ENCODE measurements at regions of chr9 and their contacts with region 1.

Region 1: DNA sequence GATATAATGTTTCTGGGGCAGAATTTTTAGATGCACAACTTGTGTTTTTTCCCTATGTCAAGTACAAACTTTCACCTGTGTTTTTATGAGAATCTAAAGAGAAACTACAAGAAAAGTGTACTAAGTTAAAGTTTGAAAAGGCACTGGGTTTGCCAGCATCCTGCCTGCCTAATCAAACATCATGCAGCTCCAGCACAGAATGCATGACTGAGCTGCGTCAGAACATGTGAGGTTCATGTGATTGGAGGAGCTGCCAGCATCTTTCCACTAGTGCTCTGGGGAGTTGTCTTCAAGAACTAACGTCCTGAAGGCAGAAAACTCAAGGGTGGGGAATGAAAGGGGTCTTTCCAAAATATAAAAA is 46.1 kb upstream of the RIC1 start:
- DNase-seq: peak; percentile 89
- ATAC-seq: peak; percentile 59
- H3K4me3 ChIP-seq: no peak overlapping the region
- H3K27ac ChIP-seq: peak overlapping the region; percentile 46
- H3K4me1 ChIP-seq: peaks cover 14% of the 10 kb centered on the region
- H3K27me3 ChIP-seq: no peaks in the 10 kb centered on the region
- CTCF ChIP-seq: no peak
- POLR2A ChIP-seq: no peak
- RAD21 ChIP-seq: no peak

Region 2: GRCh38 chr9:4382722-4383317 is 1200.0 kb before region 1 on chr9:
- CTCF ChIA-PET with region 1: no interaction called
- POLR2A ChIA-PET with region 1: no interaction called
- dilution Hi-C with region 1: no loop called
- in situ Hi-C with region 1: loop called (anchors 25 kb)
- intact Hi-C with region 1: no loop called
- DNase-seq: peak; percentile 23
- ATAC-seq: peak; percentile 64; the same call in 1 of the 2 replicates
- H3K4me3 ChIP-seq: no peak overlapping the region
- H3K27ac ChIP-seq: no peak overlapping the region
- H3K4me1 ChIP-seq: no peaks in the 10 kb centered on the region
- H3K27me3 ChIP-seq: peaks cover 19% of the 10 kb centered on the region
- CTCF ChIP-seq: peak; percentile 67
- POLR2A ChIP-seq: no peak
- RAD21 ChIP-seq: peak; percentile 70

Region 3: GRCh38 chr9:5437254-5438216 is 145.3 kb before region 1 on chr9 and contains the start of gene PLGRKT:
- CTCF ChIA-PET with region 1: interaction called, 10 read pairs
- POLR2A ChIA-PET with region 1: no interaction called
- dilution Hi-C with region 1: no loop called
- in situ Hi-C with region 1: no loop called
- intact Hi-C with region 1: no loop called
- DNase-seq: peak; percentile 87
- ATAC-seq: peak; percentile 98
- H3K4me3 ChIP-seq: peak within 1 kb of the TSS; percentile 75
- H3K27ac ChIP-seq: peak within 1 kb of the TSS; percentile 70
- H3K4me1 ChIP-seq: peaks cover 5% of the 10 kb centered on the region
- H3K27me3 ChIP-seq: no peaks in the 10 kb centered on the region
- CTCF ChIP-seq: peak; percentile 29; the same call in 1 of the 2 replicates
- POLR2A ChIP-seq: peak; percentile 81
- RAD21 ChIP-seq: peak; percentile 27
- total RNA-seq, gene PLGRKT: 12.7 and 13.6 TPM in 2 replicates

Region 4: DNA sequence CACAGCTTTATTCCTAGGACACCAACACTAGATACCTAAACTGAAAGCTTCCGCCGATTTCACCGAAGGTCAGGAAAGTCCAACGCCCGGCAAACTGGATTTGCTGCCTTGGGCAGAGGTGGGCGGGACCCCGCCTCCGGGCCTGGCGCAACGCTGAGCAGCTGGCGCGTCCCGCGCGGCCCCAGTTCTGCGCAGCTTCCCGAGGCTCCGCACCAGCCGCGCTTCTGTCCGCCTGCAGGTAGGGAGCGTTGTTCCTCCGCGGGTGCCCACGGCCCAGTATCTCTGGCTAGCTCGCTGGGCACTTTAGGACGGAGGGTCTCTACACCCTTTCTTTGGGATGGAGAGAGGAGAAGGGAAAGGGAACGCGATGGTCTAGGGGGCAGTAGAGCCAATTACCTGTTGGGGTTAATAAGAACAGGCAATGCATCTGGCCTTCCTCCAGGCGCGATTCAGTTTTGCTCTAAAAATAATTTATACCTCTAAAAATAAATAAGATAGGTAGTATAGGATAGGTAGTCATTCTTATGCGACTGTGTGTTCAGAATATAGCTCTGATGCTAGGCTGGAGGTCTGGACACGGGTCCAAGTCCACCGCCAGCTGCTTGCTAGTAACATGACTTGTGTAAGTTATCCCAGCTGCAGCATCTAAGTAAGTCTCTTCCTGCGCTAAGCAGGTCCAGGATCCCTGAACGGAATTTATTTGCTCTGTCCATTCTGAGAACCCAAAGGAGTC is 132.3 kb before region 1 on chr9 and contains the start of gene CD274:
- CTCF ChIA-PET with region 1: interaction called, 10 read pairs
- POLR2A ChIA-PET with region 1: no interaction called
- dilution Hi-C with region 1: no loop called
- in situ Hi-C with region 1: loop called (anchors 5 kb)
- intact Hi-C with region 1: no loop called
- DNase-seq: peak; percentile 93
- ATAC-seq: peak; percentile 96
- H3K4me3 ChIP-seq: peak within 1 kb of the TSS; percentile 62
- H3K27ac ChIP-seq: peak within 1 kb of the TSS; percentile 89
- H3K4me1 ChIP-seq: peaks cover 6% of the 10 kb centered on the region
- H3K27me3 ChIP-seq: no peaks in the 10 kb centered on the region
- CTCF ChIP-seq: peak; percentile 70
- POLR2A ChIP-seq: peak; percentile 83
- RAD21 ChIP-seq: peak; percentile 67
- total RNA-seq, gene CD274: 19.4 and 29.4 TPM in 2 replicates

Region 5: GRCh38 chr9:5459289-5459829 is 123.5 kb before region 1 on chr9:
- CTCF ChIA-PET with region 1: no interaction called
- POLR2A ChIA-PET with region 1: no interaction called
- dilution Hi-C with region 1: no loop called
- in situ Hi-C with region 1: loop called (anchors 5 kb)
- intact Hi-C with region 1: no loop called
- DNase-seq: no peak
- ATAC-seq: no peak
- H3K4me3 ChIP-seq: no peak overlapping the region
- H3K27ac ChIP-seq: no peak overlapping the region
- H3K4me1 ChIP-seq: peaks cover 2% of the 10 kb centered on the region; the same call in 1 of the 2 replicates
- H3K27me3 ChIP-seq: no peaks in the 10 kb centered on the region
- CTCF ChIP-seq: no peak
- POLR2A ChIP-seq: no peak
- RAD21 ChIP-seq: no peak

Region 6: GRCh38 chr9:5510360-5510931 is 72.4 kb before region 1 on chr9 and contains the start of gene PDCD1LG2:
- CTCF ChIA-PET with region 1: no interaction called
- POLR2A ChIA-PET with region 1: interaction called, 11 read pairs
- dilution Hi-C with region 1: no loop called
- in situ Hi-C with region 1: loop called (anchors 5 kb)
- intact Hi-C with region 1: loop called (anchors 1 kb)
- DNase-seq: peak; percentile 84
- ATAC-seq: peak; percentile 55
- H3K4me3 ChIP-seq: peak within 1 kb of the TSS; percentile 52
- H3K27ac ChIP-seq: peak within 1 kb of the TSS; percentile 94
- H3K4me1 ChIP-seq: peaks cover 22% of the 10 kb centered on the region
- H3K27me3 ChIP-seq: no peaks in the 10 kb centered on the region
- CTCF ChIP-seq: no peak
- POLR2A ChIP-seq: peak; percentile 55
- RAD21 ChIP-seq: no peak
- total RNA-seq, gene PDCD1LG2: 29.7 and 33.3 TPM in 2 replicates

Measured in IMR-90 (cell line).